Dorsolateral prefrontal cortex (tissue), 120 donors: ENCODE measurements at regions of chr1 and their contacts with region 1.

Region 1: GRCh38 chr1:71667216-71667615 is 586.4 kb upstream of the ZRANB2 start:
- DNase-seq: peak in 1 of 10 donors; percentile 28
- H3K4me3 ChIP-seq: no peak overlapping the region
- H3K27ac ChIP-seq: no peak overlapping the region
- H3K27me3 ChIP-seq: no peaks in the 10 kb centered on the region
- CTCF ChIP-seq: no peak

Region 2: DNA sequence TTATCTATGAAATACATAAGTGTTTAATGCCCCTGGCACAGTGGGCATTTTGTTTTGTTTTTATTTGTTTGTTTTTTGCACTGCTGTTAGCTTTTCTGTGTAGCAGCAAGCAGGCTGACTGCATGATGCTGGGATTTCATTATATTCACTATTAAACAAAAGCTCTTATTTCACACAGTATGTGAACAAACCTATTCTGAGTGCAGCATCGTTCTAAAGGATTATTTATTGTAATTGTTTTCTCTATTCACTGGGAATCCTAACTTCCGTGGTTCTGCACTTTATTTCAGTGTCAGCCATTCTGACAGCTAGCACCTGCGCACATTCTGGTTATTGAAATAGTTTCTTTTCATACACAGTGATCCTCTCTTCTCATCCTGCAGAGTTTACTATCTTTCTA is 20.1 kb after region 1 on chr1:
- intact Hi-C with region 1: loop called in 1 of 2 experiments (anchors 2 kb)
- DNase-seq: no peak
- H3K4me3 ChIP-seq: peak overlapping the region in 39 of 59 donors; percentile 0 to 53 (median 30)
- H3K27ac ChIP-seq: no peak overlapping the region
- H3K27me3 ChIP-seq: no peaks in the 10 kb centered on the region
- CTCF ChIP-seq: no peak